ENCODE measurements at regions of chr3 and their contacts with region 1.

Region 1: DNA sequence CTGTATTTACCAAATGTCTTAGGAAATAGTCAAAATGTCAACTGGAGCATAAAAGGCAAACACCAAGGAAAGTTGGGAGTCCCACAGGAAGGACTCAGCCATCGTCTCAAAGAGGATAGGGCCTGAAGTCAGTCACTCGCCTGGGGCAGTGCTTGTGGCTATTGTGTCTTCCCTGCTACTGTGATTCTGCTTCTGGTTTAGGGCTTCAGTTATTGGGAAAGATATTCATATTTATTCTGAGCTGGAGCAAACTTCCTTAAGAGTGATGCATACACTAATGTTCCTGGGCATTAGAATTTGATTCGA is 118.1 kb downstream of the EDEM1 start:
- DNase-seq: no peak
- H3K4me3 ChIP-seq: no peak overlapping the region
- H3K27ac ChIP-seq: no peak overlapping the region
- H3K27me3 ChIP-seq: no peaks in the 10 kb centered on the region
- CTCF ChIP-seq: no peak

Region 2: GRCh38 chr3:5275529-5275928 is 30.1 kb before region 1 on chr3:
- CTCF ChIA-PET with region 1: no interaction called
- POLR2A ChIA-PET with region 1: no interaction called
- DNase-seq: no peak
- H3K4me3 ChIP-seq: no peak overlapping the region
- H3K27ac ChIP-seq: no peak overlapping the region
- H3K27me3 ChIP-seq: no peaks in the 10 kb centered on the region
- CTCF ChIP-seq: no peak

Region 3: DNA sequence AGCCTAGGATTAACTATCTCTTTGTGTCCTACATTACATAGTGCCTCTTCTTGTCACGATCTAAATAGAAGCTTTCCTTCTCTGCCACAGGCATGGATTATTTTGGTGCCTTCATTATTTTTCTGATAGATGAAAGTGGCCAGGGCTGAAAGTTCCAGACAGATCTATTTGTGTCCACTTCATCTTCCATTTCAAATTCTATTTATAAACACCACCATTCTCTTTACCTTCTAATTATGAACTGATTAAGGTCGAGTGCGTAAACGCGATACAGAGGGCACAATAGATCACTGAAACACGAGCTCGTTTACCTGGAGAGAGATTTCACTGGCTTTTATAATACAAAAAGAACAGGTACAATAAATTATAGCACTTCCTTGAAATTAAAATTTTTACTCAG is 13.1 kb before region 1 on chr3:
- CTCF ChIA-PET with region 1: interaction called, 11 read pairs
- POLR2A ChIA-PET with region 1: no interaction called
- DNase-seq: no peak
- H3K4me3 ChIP-seq: no peak overlapping the region
- H3K27ac ChIP-seq: no peak overlapping the region
- H3K27me3 ChIP-seq: no peaks in the 10 kb centered on the region
- CTCF ChIP-seq: no peak

Region 4: GRCh38 chr3:5401002-5401401 is 95.4 kb after region 1 on chr3:
- CTCF ChIA-PET with region 1: no interaction called
- POLR2A ChIA-PET with region 1: no interaction called
- DNase-seq: no peak
- H3K4me3 ChIP-seq: no peak overlapping the region
- H3K27ac ChIP-seq: no peak overlapping the region
- H3K27me3 ChIP-seq: no peaks in the 10 kb centered on the region
- CTCF ChIP-seq: no peak

Measured in AG04450 (cell line).